Uterus (tissue), 4 donors: ENCODE measurements at regions of chr1 and their contacts with region 1.

Region 1: DNA sequence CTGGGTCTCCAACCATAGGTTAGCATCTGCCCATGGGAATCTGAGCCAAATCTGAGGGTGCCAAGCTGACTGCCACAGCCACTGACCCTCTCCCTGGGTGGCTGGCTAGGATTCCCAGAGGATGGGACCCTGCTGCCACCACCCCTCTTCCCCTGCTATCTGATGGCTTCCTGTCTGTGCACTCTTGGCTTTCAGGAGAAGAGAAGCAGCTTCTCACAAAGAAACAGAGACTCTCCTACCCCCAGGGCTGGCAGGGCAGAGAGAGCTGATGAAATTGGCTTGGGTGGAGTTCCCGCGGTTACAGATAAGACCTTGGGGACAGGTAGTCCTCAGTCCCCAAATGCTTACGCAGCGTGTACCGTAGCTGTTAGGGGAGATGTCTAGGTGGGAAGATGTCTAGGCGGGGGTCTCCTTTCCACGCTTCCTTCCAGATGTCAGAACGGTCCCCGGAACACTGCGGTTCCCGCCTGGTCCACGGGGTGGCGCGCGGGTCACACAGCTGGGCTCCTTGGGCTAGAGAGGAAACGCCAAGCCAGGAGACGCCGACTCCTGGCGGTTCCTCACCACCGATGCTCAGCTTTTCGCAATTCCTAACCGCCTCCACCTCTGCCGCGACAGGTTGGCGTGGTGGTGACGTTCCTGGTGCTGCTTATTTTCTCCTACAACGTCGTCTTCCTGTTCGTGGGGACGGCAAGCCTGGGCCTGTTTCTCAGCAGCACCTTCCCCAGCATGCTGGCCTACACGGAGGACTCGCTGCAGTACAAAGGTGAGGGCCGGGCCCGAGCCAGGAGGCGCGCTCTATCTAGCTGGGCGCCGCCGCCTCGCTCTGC is 40.1 kb downstream of the ELK4 start:
- DNase-seq: peak; percentile 81 to 89
- H3K4me3 ChIP-seq: peak overlapping the region; percentile 37 to 39
- H3K27ac ChIP-seq: peak overlapping the region; percentile 13 to 43
- H3K4me1 ChIP-seq: no peaks in the 10 kb centered on the region
- H3K27me3 ChIP-seq: no peaks in the 10 kb centered on the region
- CTCF ChIP-seq: peak; percentile 97 to 100 (median 99)
- POLR2A ChIP-seq: peak in 1 of 2 donors; percentile 16

Region 2: GRCh38 chr1:205449750-205450443 is 141.8 kb before region 1 on chr1:
- intact Hi-C with region 1: no loop called
- DNase-seq: peak in 1 of 2 donors; percentile 59
- H3K4me3 ChIP-seq: no peak overlapping the region
- H3K27ac ChIP-seq: no peak overlapping the region
- H3K4me1 ChIP-seq: peaks cover 0 to 15% of the 10 kb centered on the region in 2 donors
- H3K27me3 ChIP-seq: peaks cover 0 to 16% of the 10 kb centered on the region in 2 donors
- CTCF ChIP-seq: no peak
- POLR2A ChIP-seq: no peak

Region 3: DNA sequence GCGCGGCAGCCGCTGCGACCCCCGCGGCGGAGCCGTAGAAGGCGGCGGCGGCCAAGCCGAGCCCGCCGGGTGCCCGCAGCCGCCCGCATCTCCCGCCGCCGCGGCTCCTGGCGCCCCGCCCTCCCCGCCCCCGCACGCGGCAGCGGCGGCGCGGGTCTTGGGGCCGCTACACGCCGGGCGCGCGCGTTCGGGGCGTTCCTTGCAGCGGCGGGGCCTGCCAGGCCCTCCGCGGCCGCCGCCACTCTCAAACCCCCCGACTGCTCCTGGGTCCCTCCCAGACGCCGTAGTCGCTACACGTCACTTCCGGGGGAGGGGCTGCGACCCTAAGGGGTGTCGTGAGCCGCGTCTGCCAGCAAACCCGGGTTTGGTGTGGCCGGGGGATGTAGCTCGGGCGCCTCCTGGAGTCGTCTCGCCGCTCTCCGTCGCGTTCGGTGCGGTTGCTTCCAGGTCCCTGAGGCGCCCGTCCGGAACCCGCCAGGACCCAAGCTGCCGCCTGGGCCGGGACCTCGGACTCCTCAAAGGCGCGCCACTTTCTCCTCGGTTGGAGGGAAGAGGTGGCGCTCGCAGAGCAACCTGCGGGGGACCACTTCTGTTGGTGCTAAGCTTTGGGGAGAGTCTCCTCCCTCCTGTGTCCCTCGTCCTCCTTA is 40.1 kb after region 1 on chr1 and contains the start of gene ELK4:
- intact Hi-C with region 1: loop called (anchors 5 kb)
- DNase-seq: peak; percentile 98 to 99
- H3K4me3 ChIP-seq: peak within 1 kb of the TSS; percentile 86
- H3K27ac ChIP-seq: peak within 1 kb of the TSS; percentile 94 to 100
- H3K4me1 ChIP-seq: peaks cover 9 to 11% of the 10 kb centered on the region in 2 donors
- H3K27me3 ChIP-seq: no peaks in the 10 kb centered on the region
- CTCF ChIP-seq: peak; percentile 80 to 93 (median 88)
- POLR2A ChIP-seq: peak; percentile 88 to 95
- total RNA-seq, gene ELK4: 17.9 to 97.7 (median 26.7) TPM

Region 4: GRCh38 chr1:205658943-205659581 is 67.3 kb after region 1 on chr1:
- intact Hi-C with region 1: loop called (anchors 5 kb)
- DNase-seq: peak; percentile 68 to 80
- H3K4me3 ChIP-seq: no peak overlapping the region
- H3K27ac ChIP-seq: no peak overlapping the region
- H3K4me1 ChIP-seq: no peaks in the 10 kb centered on the region
- H3K27me3 ChIP-seq: no peaks in the 10 kb centered on the region
- CTCF ChIP-seq: peak; percentile 63 to 88 (median 78)
- POLR2A ChIP-seq: no peak